Right cardiac atrium (tissue), 5 donors: ENCODE measurements at regions of chr3 and their contacts with region 1.

Region 1: GRCh38 chr3:66372681-66373350 is 128.0 kb downstream of the LRIG1 start:
- DNase-seq: peak; percentile 42 to 77 (median 76)
- ATAC-seq: peak; percentile 59 to 71
- H3K4me3 ChIP-seq: no peak overlapping the region
- H3K27ac ChIP-seq: no peak overlapping the region
- H3K4me1 ChIP-seq: no peaks in the 10 kb centered on the region
- H3K27me3 ChIP-seq: no peaks in the 10 kb centered on the region

Region 2: GRCh38 chr3:66276705-66277274 is 96.0 kb before region 1 on chr3:
- intact Hi-C with region 1: loop called in 3 of 4 experiments (anchors 5 to 10 kb)
- DNase-seq: peak in 1 of 3 donors; percentile 23
- ATAC-seq: peak in 1 of 2 donors; percentile 39
- H3K4me3 ChIP-seq: no peak overlapping the region
- H3K27ac ChIP-seq: no peak overlapping the region
- H3K4me1 ChIP-seq: no peaks in the 10 kb centered on the region
- H3K27me3 ChIP-seq: no peaks in the 10 kb centered on the region